PC-9 (cell line): ENCODE measurements at regions of chr7 and their contacts with region 1.

Region 1: GRCh38 chr7:1131528-1132265 is 28.3 kb downstream of the ZFAND2A start:
- DNase-seq: no peak
- H3K4me3 ChIP-seq: no peak overlapping the region
- H3K27ac ChIP-seq: no peak overlapping the region
- H3K4me1 ChIP-seq: peaks cover 2% of the 10 kb centered on the region
- H3K27me3 ChIP-seq: no peaks in the 10 kb centered on the region
- CTCF ChIP-seq: no peak

Region 2: GRCh38 chr7:883055-884021 is 248.4 kb before region 1 on chr7:
- CTCF ChIA-PET with region 1: interaction called, 17 read pairs
- POLR2A ChIA-PET with region 1: no interaction called
- intact Hi-C with region 1: no loop called
- DNase-seq: no peak
- H3K4me3 ChIP-seq: no peak overlapping the region
- H3K27ac ChIP-seq: no peak overlapping the region
- H3K4me1 ChIP-seq: peaks cover 12% of the 10 kb centered on the region
- H3K27me3 ChIP-seq: no peaks in the 10 kb centered on the region
- CTCF ChIP-seq: no peak